ENCODE measurements at regions of chr1 and their contacts with region 1.

Region 1: GRCh38 chr1:25031966-25032667 is 102.0 kb upstream of the RUNX3 start:
- DNase-seq: no peak
- H3K4me3 Mint-ChIP-seq: peak overlapping the region; percentile 88
- H3K27ac Mint-ChIP-seq: peak overlapping the region; percentile 99
- H3K4me1 Mint-ChIP-seq: peaks cover 68% of the 10 kb centered on the region
- H3K27me3 Mint-ChIP-seq: peaks cover 2% of the 10 kb centered on the region

Region 2: DNA sequence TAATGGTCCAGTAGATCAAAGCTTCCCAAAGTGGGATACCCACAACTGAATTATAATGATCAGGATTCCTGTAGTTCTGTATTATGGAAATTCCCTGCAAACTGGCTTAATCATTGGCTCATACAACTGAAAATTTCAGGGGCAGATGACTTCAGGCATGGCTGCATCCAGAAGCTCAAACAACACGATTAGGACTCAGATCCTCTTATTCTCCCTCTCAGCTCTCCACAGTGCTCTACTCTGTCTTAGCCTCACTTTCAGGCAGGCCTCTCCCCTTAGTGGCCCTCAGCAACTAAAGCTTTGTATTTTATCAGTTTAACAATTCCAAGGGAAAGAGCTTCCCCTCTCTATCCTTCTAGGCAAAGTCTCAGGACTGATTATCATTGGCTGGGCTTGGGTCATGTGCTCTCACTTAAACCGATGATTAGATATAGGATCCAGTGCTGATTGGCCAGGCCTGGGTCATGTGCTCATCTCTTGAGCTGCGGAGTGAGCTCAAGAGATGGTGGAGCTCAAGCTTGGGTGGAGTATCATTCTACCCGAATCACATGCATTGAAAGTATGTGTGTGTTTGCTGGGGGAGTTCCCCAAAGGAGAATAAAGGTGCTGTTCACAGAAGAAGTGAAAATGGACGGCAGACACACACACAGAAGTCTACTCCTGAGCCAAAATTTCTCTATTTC is 44.1 kb before region 1 on chr1:
- intact Hi-C with region 1: loop called (anchors 1 kb)
- DNase-seq: no peak
- H3K4me3 Mint-ChIP-seq: no peak overlapping the region
- H3K27ac Mint-ChIP-seq: no peak overlapping the region
- H3K4me1 Mint-ChIP-seq: peaks cover 97% of the 10 kb centered on the region
- H3K27me3 Mint-ChIP-seq: no peaks in the 10 kb centered on the region

Region 3: DNA sequence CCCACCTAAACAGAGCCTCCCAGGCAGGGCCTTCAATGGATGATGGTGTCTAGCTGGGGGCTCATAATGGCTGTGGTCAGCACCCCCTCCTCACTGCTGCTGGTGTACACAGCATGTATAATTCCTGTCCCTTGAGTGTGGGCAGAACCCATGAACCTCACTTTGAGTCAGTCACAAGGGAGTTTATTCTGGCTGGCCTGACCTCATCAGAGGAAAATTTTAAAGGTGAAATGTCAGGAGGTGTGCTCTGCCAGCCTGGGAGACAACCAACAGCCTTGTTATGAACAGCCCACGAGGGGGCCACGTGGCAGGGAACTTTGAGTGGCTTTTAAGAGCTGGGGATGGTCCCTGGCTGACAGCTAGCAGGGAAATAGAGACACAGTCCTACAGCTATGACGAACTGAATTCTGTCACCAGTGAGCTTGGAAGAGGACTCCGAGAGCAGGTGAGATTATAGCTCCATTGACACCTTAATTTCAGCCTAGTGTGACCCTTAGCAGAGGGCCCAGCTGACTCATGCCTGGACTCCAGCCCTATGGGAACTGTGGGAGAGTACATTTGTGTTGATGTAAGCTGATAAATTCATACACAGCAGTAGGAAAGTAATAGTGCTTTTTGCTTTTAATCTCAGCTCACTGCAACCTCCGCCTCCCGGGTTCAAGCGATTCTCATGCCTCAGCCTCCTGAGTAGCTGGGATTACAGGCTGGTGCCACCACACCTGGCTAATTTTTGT is 28.5 kb before region 1 on chr1:
- intact Hi-C with region 1: loop called (anchors 1 kb)
- DNase-seq: no peak
- H3K4me3 Mint-ChIP-seq: peak overlapping the region; percentile 50
- H3K27ac Mint-ChIP-seq: peak overlapping the region; percentile 89
- H3K4me1 Mint-ChIP-seq: peaks cover 79% of the 10 kb centered on the region
- H3K27me3 Mint-ChIP-seq: no peaks in the 10 kb centered on the region

Measured in activated T-helper 1 cell treated with anti-CD3 and anti-CD28 coated beads, Interleukin-12 subunit alpha, Interleukin-12 subunit beta, Interleukin-2, Interleukin-4 antibody, amounts not matched to agents 30 ng/mL and 10 ng/mL and 1 ng/mL, durations not matched to agents 14 hours and 24 hours and 36 hours (primary cell).